ENCODE measurements at regions of chr1 and their contacts with region 1.

Region 1: DNA sequence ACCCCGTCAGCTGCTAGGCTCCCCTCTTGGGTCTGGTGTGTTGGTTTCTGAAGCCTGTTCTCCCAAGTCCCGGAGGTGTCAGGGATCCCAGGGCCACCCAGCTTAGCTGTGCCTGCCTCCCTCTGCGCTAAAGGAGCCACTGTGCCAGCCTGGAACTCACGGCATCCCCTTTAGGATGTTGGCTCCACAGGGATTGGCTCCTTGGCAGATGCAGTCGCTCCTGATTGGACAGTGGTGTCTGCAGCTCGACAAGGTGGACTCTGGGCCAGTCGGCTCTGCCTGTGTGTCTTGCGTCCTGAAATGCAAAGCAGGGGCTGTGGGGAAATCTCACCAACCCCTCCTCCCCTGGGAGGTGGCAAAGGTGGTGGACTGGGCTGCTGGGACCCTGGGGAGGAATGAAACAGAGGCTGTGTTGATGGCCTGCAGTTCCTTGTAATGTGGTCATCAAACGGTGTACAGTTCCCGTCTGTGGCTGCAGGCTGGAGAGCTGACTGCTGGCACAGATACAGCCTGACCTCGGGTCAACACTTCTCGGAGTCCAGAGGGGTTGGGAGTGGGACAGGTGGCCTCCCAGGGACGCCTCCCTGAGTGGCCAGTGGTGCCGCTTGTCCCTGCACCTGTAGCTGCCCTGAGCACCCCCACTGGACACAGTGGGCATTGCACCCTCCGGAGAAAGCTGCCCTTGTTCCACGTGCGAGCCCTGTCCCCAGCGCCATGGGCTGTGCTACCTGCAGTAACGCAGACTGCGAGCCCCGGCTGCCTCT is 11.5 kb upstream of the KCNAB2 start:
- DNase-seq: peak; percentile 49
- H3K4me3 Mint-ChIP-seq: no peak overlapping the region
- H3K27ac Mint-ChIP-seq: no peak overlapping the region
- H3K4me1 Mint-ChIP-seq: peaks cover 83% of the 10 kb centered on the region
- H3K27me3 Mint-ChIP-seq: no peaks in the 10 kb centered on the region

Region 2: GRCh38 chr1:5597290-5597831 is 436.8 kb before region 1 on chr1:
- CTCF ChIA-PET with region 1: no interaction called
- POLR2A ChIA-PET with region 1: no interaction called
- intact Hi-C with region 1: no loop called
- DNase-seq: no peak
- H3K4me3 Mint-ChIP-seq: no peak overlapping the region
- H3K27ac Mint-ChIP-seq: no peak overlapping the region
- H3K4me1 Mint-ChIP-seq: no peaks in the 10 kb centered on the region
- H3K27me3 Mint-ChIP-seq: no peaks in the 10 kb centered on the region

Region 3: DNA sequence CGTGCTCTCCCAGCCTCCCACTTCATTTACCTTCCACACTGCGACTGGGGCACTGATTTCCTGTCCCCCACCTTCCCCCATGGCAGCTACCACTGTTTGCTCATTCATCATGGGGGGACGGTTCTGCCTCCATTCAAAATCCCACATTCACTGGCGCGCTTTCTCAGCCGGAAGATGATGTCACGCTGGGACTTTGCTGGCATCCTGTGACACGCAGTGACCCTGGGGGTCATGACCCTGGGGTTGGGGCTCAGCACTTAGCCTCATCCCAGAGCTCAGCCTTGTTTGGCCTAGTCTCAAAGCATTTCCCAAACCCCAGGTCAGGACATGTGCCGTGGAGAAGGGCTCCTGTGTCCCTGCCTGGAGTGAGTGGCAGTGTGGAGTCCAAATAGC is 10.9 kb after region 1 on chr1:
- CTCF ChIA-PET with region 1: interaction called, 10 read pairs
- POLR2A ChIA-PET with region 1: no interaction called
- intact Hi-C with region 1: no loop called
- DNase-seq: no peak
- H3K4me3 Mint-ChIP-seq: no peak overlapping the region
- H3K27ac Mint-ChIP-seq: no peak overlapping the region
- H3K4me1 Mint-ChIP-seq: peaks cover 5% of the 10 kb centered on the region
- H3K27me3 Mint-ChIP-seq: no peaks in the 10 kb centered on the region